Breast epithelium (tissue), 4 donors: ENCODE measurements at regions of chr7 and their contacts with region 1.

Region 1: DNA sequence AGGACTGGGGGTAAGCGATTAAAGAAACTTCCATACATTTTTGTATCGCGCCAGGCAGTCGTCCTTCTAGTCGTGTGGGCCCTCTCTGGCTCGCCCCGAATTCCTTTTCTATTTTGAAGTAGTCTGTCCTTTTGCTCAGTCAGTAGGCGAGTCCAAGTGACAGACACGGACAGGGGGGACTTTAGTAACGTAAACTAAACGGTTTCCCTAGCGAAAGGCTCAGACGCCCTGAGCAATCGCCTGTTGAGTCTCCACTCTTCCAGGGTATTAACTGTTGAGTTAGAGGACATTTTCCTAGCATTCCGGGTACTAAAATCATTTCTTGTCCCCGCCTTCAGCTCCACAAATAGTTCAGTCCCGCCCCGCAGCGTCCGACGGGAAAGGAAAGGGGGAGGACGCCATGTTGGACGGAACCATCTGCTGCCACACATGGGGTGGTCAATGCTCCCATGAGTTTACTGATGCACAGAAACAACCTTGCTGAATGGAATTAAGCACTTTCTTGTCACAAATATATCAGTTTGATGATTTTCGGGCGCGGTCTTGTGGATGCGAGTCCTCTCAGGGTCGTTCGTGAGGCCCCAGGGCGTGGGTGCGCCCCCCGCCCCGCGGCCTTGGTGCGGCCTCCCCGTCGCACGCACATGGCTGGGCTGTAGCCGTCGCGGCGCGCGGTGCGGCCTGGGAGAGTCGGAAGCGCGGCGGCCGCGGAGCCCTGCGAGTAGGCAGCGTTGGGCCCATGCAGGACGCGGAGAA is at the start of gene EIF3B:
- DNase-seq: peak; percentile 86 to 89
- H3K4me3 ChIP-seq: peak within 1 kb of the TSS; percentile 91 to 99 (median 99)
- H3K27ac ChIP-seq: peak within 1 kb of the TSS; percentile 100
- H3K4me1 ChIP-seq: peaks cover 5 to 12% of the 10 kb centered on the region in 2 donors
- H3K27me3 ChIP-seq: no peaks in the 10 kb centered on the region
- CTCF ChIP-seq: peak in 1 of 3 donors; percentile 11
- POLR2A ChIP-seq: no peak
- total RNA-seq, gene EIF3B: 111 to 122 (median 115) TPM

Region 2: GRCh38 chr7:2241580-2242540 is 112.5 kb before region 1 on chr7 and contains the starts of genes MRM2 and NUDT1:
- intact Hi-C with region 1: loop called (anchors 10 kb)
- DNase-seq: peak; percentile 70 to 80
- H3K4me3 ChIP-seq: peak within 1 kb of the TSS; percentile 83 to 89 (median 83)
- H3K27ac ChIP-seq: peak within 1 kb of the TSS; percentile 50 to 57
- H3K4me1 ChIP-seq: peaks cover 0 to 12% of the 10 kb centered on the region in 2 donors
- H3K27me3 ChIP-seq: no peaks in the 10 kb centered on the region
- CTCF ChIP-seq: no peak
- POLR2A ChIP-seq: no peak
- total RNA-seq, gene MRM2: 10.9 to 20.2 (median 18.0) TPM
- total RNA-seq, gene NUDT1: 13.3 to 28.5 (median 18.0) TPM

Region 3: DNA sequence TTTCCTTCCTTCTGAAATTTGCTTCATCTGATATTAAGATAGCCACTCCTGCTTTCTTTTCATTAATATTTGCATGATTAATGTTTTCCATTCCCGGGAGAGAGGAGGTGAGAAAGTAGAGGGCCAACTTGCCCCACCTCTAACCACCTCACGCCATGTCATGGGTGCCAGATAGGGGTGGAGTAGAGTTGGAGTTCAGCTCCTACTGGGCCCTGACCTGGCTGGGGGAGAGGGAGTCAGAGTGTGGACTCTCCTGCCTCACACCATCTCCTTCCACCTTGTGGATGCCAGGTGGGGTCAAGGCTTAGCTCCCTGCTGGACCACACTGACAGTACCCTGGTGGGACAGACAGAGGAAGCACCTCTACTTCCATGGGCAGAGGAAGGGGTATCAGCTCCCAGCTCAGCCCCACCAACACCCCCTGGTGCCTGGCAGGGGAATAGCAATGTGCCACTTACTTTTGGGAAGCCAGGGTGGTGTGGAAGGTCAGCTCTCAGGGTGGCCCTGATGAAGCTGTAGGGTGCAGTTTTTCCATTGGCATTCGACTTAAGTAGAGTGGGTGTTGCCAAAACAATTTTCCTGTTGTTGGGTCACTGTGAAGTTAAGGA is 77.0 kb after region 1 on chr7:
- intact Hi-C with region 1: loop called (anchors 2 kb)
- DNase-seq: no peak
- H3K4me3 ChIP-seq: no peak overlapping the region
- H3K27ac ChIP-seq: no peak overlapping the region
- H3K4me1 ChIP-seq: no peaks in the 10 kb centered on the region
- H3K27me3 ChIP-seq: no peaks in the 10 kb centered on the region
- CTCF ChIP-seq: peak in 1 of 3 donors; percentile 12
- POLR2A ChIP-seq: no peak

Region 4: GRCh38 chr7:3294432-3295100 is 940.2 kb after region 1 on chr7:
- intact Hi-C with region 1: no loop called
- DNase-seq: no peak
- H3K4me3 ChIP-seq: no peak overlapping the region
- H3K27ac ChIP-seq: no peak overlapping the region
- H3K4me1 ChIP-seq: no peaks in the 10 kb centered on the region
- H3K27me3 ChIP-seq: no peaks in the 10 kb centered on the region
- CTCF ChIP-seq: no peak
- POLR2A ChIP-seq: no peak